ENCODE measurements at regions of chr3 and their contacts with region 1.

Region 1: GRCh38 chr3:77038468-77038929 is 1.4 kb upstream of the ROBO2 start:
- DNase-seq: peak; percentile 93
- H3K4me3 ChIP-seq: peak overlapping the region; percentile 67
- H3K27ac ChIP-seq: peak overlapping the region; percentile 82
- H3K4me1 ChIP-seq: peaks cover 6% of the 10 kb centered on the region
- H3K27me3 ChIP-seq: no peaks in the 10 kb centered on the region
- CTCF ChIP-seq: peak; percentile 55

Region 2: GRCh38 chr3:76753599-76753998 is 284.9 kb before region 1 on chr3:
- CTCF ChIA-PET with region 1: no interaction called
- POLR2A ChIA-PET with region 1: no interaction called
- intact Hi-C with region 1: loop called (anchors 10 kb)
- DNase-seq: peak; percentile 48
- H3K4me3 ChIP-seq: no peak overlapping the region
- H3K27ac ChIP-seq: no peak overlapping the region
- H3K4me1 ChIP-seq: peaks cover 16% of the 10 kb centered on the region
- H3K27me3 ChIP-seq: no peaks in the 10 kb centered on the region
- CTCF ChIP-seq: peak; percentile 58

Region 3: DNA sequence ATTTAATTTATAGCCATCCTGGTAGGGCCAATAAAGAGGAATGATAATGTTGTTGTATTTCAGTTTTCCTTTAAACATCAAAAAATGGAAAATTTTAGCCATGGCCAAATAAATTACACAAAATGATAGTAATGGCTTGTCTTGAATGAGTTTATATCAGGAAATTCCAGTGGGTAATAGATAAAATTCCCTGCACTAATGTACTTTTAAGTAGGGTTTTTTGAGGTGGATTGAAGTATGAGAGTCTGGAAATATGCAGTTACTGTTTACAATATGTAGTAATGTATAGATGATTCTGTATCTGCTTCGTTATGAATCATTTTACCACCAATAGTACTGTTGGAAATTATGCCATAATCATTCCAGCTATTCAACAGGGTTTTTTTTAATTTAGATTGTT is 218.0 kb before region 1 on chr3:
- CTCF ChIA-PET with region 1: no interaction called
- POLR2A ChIA-PET with region 1: no interaction called
- intact Hi-C with region 1: no loop called
- DNase-seq: no peak
- H3K4me3 ChIP-seq: no peak overlapping the region
- H3K27ac ChIP-seq: no peak overlapping the region
- H3K4me1 ChIP-seq: peaks cover 3% of the 10 kb centered on the region
- H3K27me3 ChIP-seq: no peaks in the 10 kb centered on the region
- CTCF ChIP-seq: no peak

Region 4: GRCh38 chr3:76930712-76931111 is 107.8 kb before region 1 on chr3:
- CTCF ChIA-PET with region 1: no interaction called
- POLR2A ChIA-PET with region 1: no interaction called
- intact Hi-C with region 1: loop called (anchors 10 kb)
- DNase-seq: no peak
- H3K4me3 ChIP-seq: no peak overlapping the region
- H3K27ac ChIP-seq: no peak overlapping the region
- H3K4me1 ChIP-seq: peaks cover 21% of the 10 kb centered on the region
- H3K27me3 ChIP-seq: no peaks in the 10 kb centered on the region
- CTCF ChIP-seq: no peak

Region 5: DNA sequence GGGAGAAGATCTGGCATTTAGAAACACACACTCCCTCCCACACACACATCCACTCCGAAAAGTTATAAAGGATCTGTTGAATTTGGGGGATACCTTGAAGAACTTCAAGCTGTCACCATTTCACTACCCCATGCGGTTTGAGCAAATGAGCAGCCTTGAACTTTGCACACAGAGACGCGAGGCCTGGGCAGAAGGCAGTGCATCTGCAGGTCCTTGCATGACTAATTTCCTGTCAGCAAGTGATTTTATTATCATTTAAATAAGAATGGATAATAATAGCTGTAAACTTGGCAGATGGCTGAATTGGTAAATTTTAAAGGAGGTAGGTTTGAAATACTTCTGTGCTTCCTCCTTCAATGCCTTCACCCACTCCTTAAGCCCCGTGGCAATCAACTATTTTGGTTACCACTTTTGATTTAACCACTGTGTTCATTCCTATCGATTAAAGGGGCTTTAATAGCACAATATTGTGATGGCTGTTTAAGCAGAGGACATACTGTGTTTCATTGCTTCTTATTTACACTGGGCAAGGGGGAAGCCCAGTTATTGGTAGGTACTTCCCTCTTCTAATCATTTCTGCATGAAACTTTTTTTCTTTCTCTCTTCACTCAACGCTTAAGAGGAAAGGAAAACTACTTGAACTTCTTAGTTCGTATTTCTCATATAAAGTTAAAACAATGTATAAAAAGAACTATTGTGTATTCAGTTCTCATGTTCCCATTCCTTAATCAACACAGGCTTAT is 109.5 kb after region 1 on chr3:
- CTCF ChIA-PET with region 1: no interaction called
- POLR2A ChIA-PET with region 1: no interaction called
- intact Hi-C with region 1: loop called (anchors 10 kb)
- DNase-seq: peak; percentile 82
- H3K4me3 ChIP-seq: no peak overlapping the region
- H3K27ac ChIP-seq: no peak overlapping the region
- H3K4me1 ChIP-seq: peaks cover 32% of the 10 kb centered on the region
- H3K27me3 ChIP-seq: no peaks in the 10 kb centered on the region
- CTCF ChIP-seq: no peak

Region 6: GRCh38 chr3:77320514-77320913 is 282.0 kb after region 1 on chr3:
- CTCF ChIA-PET with region 1: interaction called, 9 read pairs
- POLR2A ChIA-PET with region 1: no interaction called
- intact Hi-C with region 1: loop called (anchors 2 kb)
- DNase-seq: peak; percentile 46
- H3K4me3 ChIP-seq: no peak overlapping the region
- H3K27ac ChIP-seq: peak overlapping the region; percentile 42
- H3K4me1 ChIP-seq: peaks cover 8% of the 10 kb centered on the region
- H3K27me3 ChIP-seq: no peaks in the 10 kb centered on the region
- CTCF ChIP-seq: peak; percentile 63

Region 7: GRCh38 chr3:77682162-77682561 is 643.7 kb after region 1 on chr3:
- CTCF ChIA-PET with region 1: no interaction called
- POLR2A ChIA-PET with region 1: no interaction called
- intact Hi-C with region 1: no loop called
- DNase-seq: no peak
- H3K4me3 ChIP-seq: no peak overlapping the region
- H3K27ac ChIP-seq: no peak overlapping the region
- H3K4me1 ChIP-seq: no peaks in the 10 kb centered on the region
- H3K27me3 ChIP-seq: no peaks in the 10 kb centered on the region
- CTCF ChIP-seq: no peak